Endothelial cell of umbilical vein (primary cell): ENCODE measurements at regions of chr20 and their contacts with region 1.

Region 1: DNA sequence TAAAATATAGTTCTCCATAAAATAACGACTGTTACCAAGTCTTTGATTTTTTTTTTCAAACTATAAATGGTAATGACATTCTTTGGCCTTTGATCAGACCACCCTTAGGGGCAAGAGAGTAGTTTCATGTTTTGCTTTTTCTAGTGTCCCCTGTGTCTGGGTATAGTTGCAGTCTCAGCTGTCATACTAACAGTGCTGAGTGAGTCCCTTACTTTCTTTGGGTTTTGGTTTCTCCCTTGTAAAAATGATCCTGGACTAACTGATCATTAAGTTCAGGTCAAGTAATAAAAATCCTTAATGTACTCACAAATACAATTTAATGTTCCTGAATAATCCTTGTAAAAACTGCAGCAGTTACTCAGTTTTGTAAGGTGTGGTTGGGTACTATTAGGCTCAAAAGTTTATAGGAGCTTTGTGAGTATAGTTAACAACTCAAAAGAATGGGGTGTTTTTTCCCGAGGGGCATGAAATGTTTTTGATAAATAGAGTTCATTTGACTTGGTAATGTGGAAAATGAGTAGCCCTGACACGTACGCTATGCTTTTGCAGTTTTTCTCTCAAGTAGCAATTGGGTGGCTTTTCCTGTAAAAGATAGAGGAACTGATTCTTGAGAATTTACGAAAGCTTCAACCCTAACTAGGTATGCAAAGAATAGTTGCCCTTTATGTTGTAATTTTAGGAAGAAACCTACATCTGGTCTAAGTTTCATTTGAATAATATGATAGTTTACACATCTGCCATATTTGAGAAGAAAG is 6.2 kb downstream of the PTPN1 start:
- DNase-seq: no peak
- H3K4me3 ChIP-seq: no peak overlapping the region
- H3K27ac ChIP-seq: no peak overlapping the region
- H3K4me1 ChIP-seq: peaks cover 45% of the 10 kb centered on the region
- H3K27me3 ChIP-seq: no peaks in the 10 kb centered on the region
- CTCF ChIP-seq: no peak
- POLR2A ChIP-seq: no peak

Region 2: GRCh38 chr20:50070991-50071888 is 445.1 kb before region 1 on chr20:
- CTCF ChIA-PET with region 1: no interaction called
- POLR2A ChIA-PET with region 1: no interaction called
- dilution Hi-C with region 1: no loop called
- intact Hi-C with region 1: no loop called
- DNase-seq: peak; percentile 85
- H3K4me3 ChIP-seq: peak overlapping the region in 1 of 3 experiments; percentile 32
- H3K27ac ChIP-seq: no peak overlapping the region
- H3K4me1 ChIP-seq: no peaks in the 10 kb centered on the region
- H3K27me3 ChIP-seq: no peaks in the 10 kb centered on the region
- CTCF ChIP-seq: peak; percentile 99 to 100
- POLR2A ChIP-seq: no peak

Region 3: GRCh38 chr20:50484276-50484976 is 31.9 kb before region 1 on chr20:
- CTCF ChIA-PET with region 1: interaction called, 10 read pairs
- POLR2A ChIA-PET with region 1: interaction called, 4 read pairs
- dilution Hi-C with region 1: no loop called
- intact Hi-C with region 1: loop called (anchors 2 kb)
- DNase-seq: no peak
- H3K4me3 ChIP-seq: peak overlapping the region in 1 of 3 experiments; percentile 59
- H3K27ac ChIP-seq: peak overlapping the region; percentile 72
- H3K4me1 ChIP-seq: peaks cover 12% of the 10 kb centered on the region
- H3K27me3 ChIP-seq: no peaks in the 10 kb centered on the region
- CTCF ChIP-seq: no peak
- POLR2A ChIP-seq: no peak

Region 4: GRCh38 chr20:50534567-50535551 is 18.5 kb after region 1 on chr20:
- CTCF ChIA-PET with region 1: interaction called, 21 read pairs
- POLR2A ChIA-PET with region 1: interaction called, 5 read pairs
- dilution Hi-C with region 1: no loop called
- intact Hi-C with region 1: no loop called
- DNase-seq: no peak
- H3K4me3 ChIP-seq: no peak overlapping the region
- H3K27ac ChIP-seq: no peak overlapping the region
- H3K4me1 ChIP-seq: peaks cover 16% of the 10 kb centered on the region
- H3K27me3 ChIP-seq: no peaks in the 10 kb centered on the region
- CTCF ChIP-seq: no peak
- POLR2A ChIP-seq: no peak

Region 5: GRCh38 chr20:50561379-50562078 is 45.2 kb after region 1 on chr20:
- CTCF ChIA-PET with region 1: interaction called, 10 read pairs
- POLR2A ChIA-PET with region 1: interaction called, 16 read pairs
- dilution Hi-C with region 1: no loop called
- intact Hi-C with region 1: loop called (anchors 1 kb)
- DNase-seq: peak; percentile 97
- H3K4me3 ChIP-seq: peak overlapping the region in 1 of 3 experiments; percentile 3
- H3K27ac ChIP-seq: peak overlapping the region; percentile 84
- H3K4me1 ChIP-seq: peaks cover 47% of the 10 kb centered on the region
- H3K27me3 ChIP-seq: no peaks in the 10 kb centered on the region
- CTCF ChIP-seq: no peak
- POLR2A ChIP-seq: no peak